MCF 10A (cell line): ENCODE measurements at regions of chr1 and their contacts with region 1.

Region 1: GRCh38 chr1:8817406-8818324 is at the start of gene RERE:
- DNase-seq: peak; percentile 93
- H3K4me3 Mint-ChIP-seq: peak within 1 kb of the TSS; percentile 84
- H3K27ac Mint-ChIP-seq: peak within 1 kb of the TSS; percentile 97
- H3K4me1 Mint-ChIP-seq: peaks cover 44% of the 10 kb centered on the region
- H3K27me3 Mint-ChIP-seq: no peaks in the 10 kb centered on the region
- CTCF ChIP-seq: no peak
- total RNA-seq, gene RERE: 36.8 and 48.4 TPM in 2 replicates

Region 2: GRCh38 chr1:8693107-8693506 is 124.6 kb before region 1 on chr1:
- CTCF ChIA-PET with region 1: no interaction called
- POLR2A ChIA-PET with region 1: no interaction called
- intact Hi-C with region 1: no loop called
- DNase-seq: no peak
- H3K4me3 Mint-ChIP-seq: no peak overlapping the region
- H3K27ac Mint-ChIP-seq: no peak overlapping the region
- H3K4me1 Mint-ChIP-seq: peaks cover 6% of the 10 kb centered on the region
- H3K27me3 Mint-ChIP-seq: no peaks in the 10 kb centered on the region
- CTCF ChIP-seq: no peak

Region 3: DNA sequence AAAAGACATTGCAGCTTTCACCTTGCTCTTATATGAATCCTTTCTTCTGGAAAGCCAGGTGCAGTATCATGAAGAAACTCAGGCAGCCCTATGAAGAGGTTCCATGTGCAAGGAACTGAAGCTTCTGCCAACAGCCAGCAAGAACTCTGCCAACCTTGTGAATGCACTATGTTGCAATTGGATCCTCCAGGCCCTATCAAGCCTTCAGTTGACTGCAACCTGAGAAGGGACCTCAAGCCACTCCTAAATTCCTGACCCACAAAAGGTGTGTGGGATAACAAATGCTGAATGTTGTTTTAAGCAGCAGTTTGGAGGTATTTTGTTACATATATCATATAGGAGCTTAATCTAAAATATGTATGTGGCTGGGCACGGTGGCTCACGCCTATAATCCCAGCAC is 84.2 kb before region 1 on chr1:
- CTCF ChIA-PET with region 1: interaction called, 4 read pairs
- POLR2A ChIA-PET with region 1: interaction called, 14 read pairs
- intact Hi-C with region 1: no loop called
- DNase-seq: peak; percentile 96
- H3K4me3 Mint-ChIP-seq: no peak overlapping the region
- H3K27ac Mint-ChIP-seq: no peak overlapping the region
- H3K4me1 Mint-ChIP-seq: peaks cover 6% of the 10 kb centered on the region
- H3K27me3 Mint-ChIP-seq: no peaks in the 10 kb centered on the region
- CTCF ChIP-seq: no peak

Region 4: DNA sequence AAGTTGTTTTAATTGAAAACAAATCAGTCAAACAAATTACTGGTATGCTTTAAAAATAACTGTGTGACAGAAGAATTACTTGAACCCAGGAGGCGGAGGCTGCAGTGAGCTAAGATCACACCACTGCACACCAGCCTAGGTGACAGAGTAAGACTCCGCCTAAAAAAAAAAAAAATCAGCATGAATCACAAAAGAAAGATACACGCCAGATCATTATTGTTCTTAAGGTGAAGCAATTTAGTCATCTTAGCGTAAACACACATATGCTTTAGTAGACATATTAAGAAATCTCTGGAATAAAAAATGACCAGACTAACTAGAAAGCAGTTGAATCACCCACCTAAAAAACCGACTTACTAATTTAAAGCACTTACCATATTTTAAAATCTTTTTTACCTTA is 20.4 kb before region 1 on chr1:
- CTCF ChIA-PET with region 1: interaction called, 9 read pairs
- POLR2A ChIA-PET with region 1: interaction called, 5 read pairs
- intact Hi-C with region 1: loop called (anchors 2 kb)
- DNase-seq: peak; percentile 77
- H3K4me3 Mint-ChIP-seq: no peak overlapping the region
- H3K27ac Mint-ChIP-seq: peak overlapping the region; percentile 59
- H3K4me1 Mint-ChIP-seq: peaks cover 10% of the 10 kb centered on the region
- H3K27me3 Mint-ChIP-seq: no peaks in the 10 kb centered on the region
- CTCF ChIP-seq: no peak

Region 5: GRCh38 chr1:8858888-8859706 is 41.4 kb after region 1 on chr1:
- CTCF ChIA-PET with region 1: interaction called, 3 read pairs
- POLR2A ChIA-PET with region 1: interaction called, 13 read pairs
- intact Hi-C with region 1: no loop called
- DNase-seq: peak; percentile 65
- H3K4me3 Mint-ChIP-seq: no peak overlapping the region
- H3K27ac Mint-ChIP-seq: peak overlapping the region; percentile 66
- H3K4me1 Mint-ChIP-seq: no peaks in the 10 kb centered on the region
- H3K27me3 Mint-ChIP-seq: no peaks in the 10 kb centered on the region
- CTCF ChIP-seq: peak; percentile 45

Region 6: DNA sequence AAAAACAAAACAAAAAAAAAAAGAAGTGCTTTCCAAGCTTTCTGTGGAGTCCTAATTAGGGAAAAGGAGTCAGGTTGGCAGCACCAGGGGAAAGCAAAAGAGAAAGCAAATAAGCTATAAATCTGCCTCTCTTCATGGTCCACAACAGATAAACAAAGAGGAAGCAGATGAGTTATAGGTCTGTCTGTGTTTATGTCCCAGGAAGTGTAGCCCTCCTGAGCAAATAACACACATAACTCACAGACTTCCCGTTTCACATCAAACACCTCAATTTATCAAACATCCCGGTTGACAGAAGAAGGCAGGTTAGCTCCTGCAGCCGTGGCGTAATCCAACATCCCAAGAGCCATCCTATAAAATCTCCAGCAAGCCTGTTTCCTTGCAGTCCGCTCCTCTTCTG is 257.4 kb after region 1 on chr1:
- CTCF ChIA-PET with region 1: no interaction called
- POLR2A ChIA-PET with region 1: no interaction called
- intact Hi-C with region 1: no loop called
- DNase-seq: no peak
- H3K4me3 Mint-ChIP-seq: no peak overlapping the region
- H3K27ac Mint-ChIP-seq: no peak overlapping the region
- H3K4me1 Mint-ChIP-seq: peaks cover 26% of the 10 kb centered on the region
- H3K27me3 Mint-ChIP-seq: no peaks in the 10 kb centered on the region
- CTCF ChIP-seq: no peak